ENCODE measurements at regions of chr1 and their contacts with region 1.

Region 1: DNA sequence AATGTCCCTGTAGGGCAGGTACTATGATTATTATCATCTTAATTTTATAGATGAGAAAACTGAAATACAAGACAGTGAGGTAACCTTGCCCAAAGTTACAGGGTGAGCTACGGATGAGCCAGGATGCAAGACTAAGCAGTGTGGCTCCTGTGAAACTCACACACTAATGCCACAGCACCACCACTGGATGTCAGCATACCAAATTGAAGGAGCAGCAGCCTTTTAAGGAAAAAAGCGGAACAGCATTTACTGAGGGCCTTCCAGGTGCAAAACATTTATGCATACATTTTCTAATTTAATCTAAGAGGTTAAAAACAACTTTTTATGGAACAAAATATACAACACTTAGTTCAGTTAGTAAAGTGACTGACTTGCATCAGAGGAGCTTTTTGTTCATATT is 41.7 kb downstream of the SEC16B start:
- DNase-seq: no peak
- H3K4me3 ChIP-seq: no peak overlapping the region
- H3K27ac ChIP-seq: no peak overlapping the region
- H3K4me1 ChIP-seq: no peaks in the 10 kb centered on the region
- H3K27me3 ChIP-seq: no peaks in the 10 kb centered on the region
- CTCF ChIP-seq: no peak
- POLR2A ChIP-seq: no peak

Region 2: GRCh38 chr1:178962853-178963711 is 1034.9 kb after region 1 on chr1:
- intact Hi-C with region 1: loop called (anchors 10 kb)
- DNase-seq: no peak
- H3K4me3 ChIP-seq: no peak overlapping the region
- H3K27ac ChIP-seq: no peak overlapping the region
- H3K4me1 ChIP-seq: no peaks in the 10 kb centered on the region
- H3K27me3 ChIP-seq: no peaks in the 10 kb centered on the region
- CTCF ChIP-seq: no peak
- POLR2A ChIP-seq: no peak

Measured in breast epithelium (tissue), 4 donors.